ENCODE measurements at regions of chr1 and their contacts with region 1.

Region 1: DNA sequence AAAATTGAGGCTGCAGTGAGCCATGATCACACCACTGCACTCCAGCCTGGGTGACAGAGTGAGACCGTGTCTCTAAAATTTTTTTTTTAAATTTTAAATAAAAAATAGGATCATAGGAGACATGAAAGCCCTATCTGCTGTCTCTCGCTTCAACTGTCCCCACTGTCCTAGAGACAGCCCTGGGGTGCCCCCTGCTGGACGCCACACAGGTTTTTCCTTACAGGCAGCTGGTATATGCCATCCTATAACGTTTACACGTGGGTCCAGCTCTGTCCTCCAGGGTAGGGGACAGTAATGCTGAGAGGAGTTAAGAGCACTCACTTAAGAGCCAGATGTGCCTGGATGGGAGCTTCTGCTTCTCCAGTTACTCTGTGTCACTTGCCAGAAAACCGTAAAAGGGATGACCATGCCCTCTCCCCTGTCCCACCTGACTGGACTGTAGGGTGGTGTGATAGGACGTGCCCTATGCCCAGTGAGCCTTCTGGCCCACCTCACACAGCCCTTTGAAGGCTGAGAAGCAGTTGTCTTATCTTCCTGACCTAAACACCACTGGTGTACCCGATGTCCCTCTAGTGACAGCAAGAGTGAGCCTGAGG is 8.5 kb downstream of the FBXO2 start:
- DNase-seq: no peak
- H3K4me3 ChIP-seq: no peak overlapping the region
- H3K27ac ChIP-seq: no peak overlapping the region
- H3K4me1 ChIP-seq: peaks cover 27 to 36% (median 32%) of the 10 kb centered on the region in 4 donors
- H3K27me3 ChIP-seq: peaks cover 0 to 75% (median 9%) of the 10 kb centered on the region in 4 donors
- CTCF ChIP-seq: peak; percentile 53 to 81 (median 60)
- EP300 ChIP-seq: no peak
- POLR2A ChIP-seq: no peak

Region 2: GRCh38 chr1:11037740-11038182 is 608.0 kb before region 1 on chr1:
- intact Hi-C with region 1: loop called (anchors 2 kb)
- DNase-seq: peak; percentile 95
- H3K4me3 ChIP-seq: no peak overlapping the region
- H3K27ac ChIP-seq: no peak overlapping the region
- H3K4me1 ChIP-seq: peaks cover 6 to 12% (median 8%) of the 10 kb centered on the region in 4 donors
- H3K27me3 ChIP-seq: no peaks in the 10 kb centered on the region
- CTCF ChIP-seq: peak; percentile 93 to 98 (median 96)
- EP300 ChIP-seq: no peak
- POLR2A ChIP-seq: no peak

Region 3: DNA sequence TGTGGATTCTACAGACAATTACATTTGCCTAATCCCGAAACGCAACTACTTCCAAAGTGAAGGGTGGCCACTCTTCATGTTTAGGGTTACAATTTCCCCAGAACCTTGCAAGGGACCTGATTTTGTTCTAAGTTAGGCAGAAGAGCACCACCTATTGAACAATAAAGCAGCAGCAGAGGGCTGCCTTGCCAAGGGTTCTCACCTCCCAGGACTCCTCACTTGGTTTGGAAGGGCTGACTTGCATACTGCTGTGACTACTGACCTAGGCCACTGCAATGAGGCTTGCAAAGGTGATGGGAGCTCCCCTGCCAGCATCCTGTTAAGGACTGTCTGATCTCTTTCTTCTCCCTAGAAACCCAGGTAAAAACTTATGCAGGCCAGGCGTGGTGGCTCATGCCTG is 397.6 kb before region 1 on chr1:
- intact Hi-C with region 1: loop called (anchors 5 kb)
- DNase-seq: no peak
- H3K4me3 ChIP-seq: no peak overlapping the region
- H3K27ac ChIP-seq: no peak overlapping the region
- H3K4me1 ChIP-seq: no peaks in the 10 kb centered on the region
- H3K27me3 ChIP-seq: no peaks in the 10 kb centered on the region
- CTCF ChIP-seq: no peak
- EP300 ChIP-seq: no peak
- POLR2A ChIP-seq: no peak

Region 4: DNA sequence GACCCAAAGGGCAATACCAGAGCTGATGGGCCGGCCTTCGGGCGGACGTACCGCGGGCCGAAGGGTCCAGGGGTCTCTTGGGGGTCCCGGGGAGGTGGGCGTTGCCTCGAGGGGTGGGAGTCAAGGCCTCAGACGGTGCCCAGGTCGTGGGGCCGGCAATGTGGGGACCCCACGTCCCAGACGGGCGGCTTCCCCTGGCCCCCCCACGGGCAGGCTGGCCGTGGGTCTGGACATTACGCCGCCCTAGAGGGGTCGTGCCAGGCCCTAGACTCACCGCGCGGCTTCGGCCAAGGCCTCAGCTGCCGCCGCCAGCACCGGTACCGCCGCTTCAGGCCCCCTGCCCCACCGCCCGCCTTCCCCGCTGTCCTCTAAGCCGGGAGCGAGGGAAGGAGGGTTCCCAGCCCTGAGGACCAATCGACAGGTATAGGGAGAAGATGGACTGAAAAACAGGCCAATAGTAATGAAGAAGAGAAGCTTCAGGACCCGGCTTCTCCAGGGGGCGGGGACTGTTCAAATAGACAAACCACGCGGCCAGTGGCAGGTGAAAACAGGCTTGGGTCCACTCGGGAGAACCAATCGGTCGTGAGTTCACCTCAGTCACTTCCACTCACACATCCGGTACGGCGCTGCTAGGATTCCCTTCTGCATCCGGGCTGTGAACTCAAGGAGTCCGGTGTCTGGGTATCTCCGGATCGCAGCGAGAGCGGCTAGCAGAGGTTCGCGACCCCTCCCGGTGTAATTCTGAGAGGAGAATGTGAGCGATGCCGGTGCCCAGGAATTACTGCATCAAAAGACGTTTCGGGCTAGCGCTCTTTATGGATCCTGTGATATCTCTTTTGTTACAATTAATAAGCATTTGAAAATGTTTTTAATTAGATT is 383.4 kb before region 1 on chr1 and contains the start of gene MTOR:
- intact Hi-C with region 1: loop called (anchors 5 kb)
- DNase-seq: peak; percentile 99
- H3K4me3 ChIP-seq: peak within 1 kb of the TSS; percentile 95 to 100 (median 98)
- H3K27ac ChIP-seq: peak within 1 kb of the TSS; percentile 85 to 89 (median 88)
- H3K4me1 ChIP-seq: peaks cover 13 to 25% (median 23%) of the 10 kb centered on the region in 4 donors
- H3K27me3 ChIP-seq: no peaks in the 10 kb centered on the region
- CTCF ChIP-seq: peak in 2 of 3 experiments; percentile 7 to 36
- EP300 ChIP-seq: no peak
- POLR2A ChIP-seq: peak; percentile 16
- total RNA-seq, gene MTOR: 33.6 to 51.1 (median 41.0) TPM

Region 5: GRCh38 chr1:11337580-11338073 is 308.1 kb before region 1 on chr1:
- intact Hi-C with region 1: loop called (anchors 5 kb)
- DNase-seq: no peak
- H3K4me3 ChIP-seq: no peak overlapping the region
- H3K27ac ChIP-seq: no peak overlapping the region
- H3K4me1 ChIP-seq: peaks cover 0 to 17% (median 8%) of the 10 kb centered on the region in 4 donors
- H3K27me3 ChIP-seq: peaks cover 0 to 93% (median 16%) of the 10 kb centered on the region in 4 donors
- CTCF ChIP-seq: peak; percentile 31 to 50 (median 49)
- EP300 ChIP-seq: no peak
- POLR2A ChIP-seq: no peak

Region 6: GRCh38 chr1:11522400-11523235 is 123.2 kb before region 1 on chr1:
- intact Hi-C with region 1: no loop called
- DNase-seq: no peak
- H3K4me3 ChIP-seq: no peak overlapping the region
- H3K27ac ChIP-seq: no peak overlapping the region
- H3K4me1 ChIP-seq: no peaks in the 10 kb centered on the region
- H3K27me3 ChIP-seq: peaks cover 0 to 30% (median 0%) of the 10 kb centered on the region in 4 donors
- CTCF ChIP-seq: no peak
- EP300 ChIP-seq: no peak
- POLR2A ChIP-seq: no peak

Region 7: GRCh38 chr1:11719313-11720032 is 73.7 kb after region 1 on chr1:
- intact Hi-C with region 1: loop called (anchors 2 kb)
- DNase-seq: peak; percentile 95
- H3K4me3 ChIP-seq: peak overlapping the region; percentile 42 to 58 (median 50)
- H3K27ac ChIP-seq: peak overlapping the region; percentile 20 to 45 (median 40)
- H3K4me1 ChIP-seq: peaks cover 8 to 28% (median 21%) of the 10 kb centered on the region in 4 donors
- H3K27me3 ChIP-seq: peaks cover 0 to 18% (median 0%) of the 10 kb centered on the region in 4 donors
- CTCF ChIP-seq: peak in 2 of 3 experiments; percentile 92 to 94
- EP300 ChIP-seq: no peak
- POLR2A ChIP-seq: no peak

Region 8: DNA sequence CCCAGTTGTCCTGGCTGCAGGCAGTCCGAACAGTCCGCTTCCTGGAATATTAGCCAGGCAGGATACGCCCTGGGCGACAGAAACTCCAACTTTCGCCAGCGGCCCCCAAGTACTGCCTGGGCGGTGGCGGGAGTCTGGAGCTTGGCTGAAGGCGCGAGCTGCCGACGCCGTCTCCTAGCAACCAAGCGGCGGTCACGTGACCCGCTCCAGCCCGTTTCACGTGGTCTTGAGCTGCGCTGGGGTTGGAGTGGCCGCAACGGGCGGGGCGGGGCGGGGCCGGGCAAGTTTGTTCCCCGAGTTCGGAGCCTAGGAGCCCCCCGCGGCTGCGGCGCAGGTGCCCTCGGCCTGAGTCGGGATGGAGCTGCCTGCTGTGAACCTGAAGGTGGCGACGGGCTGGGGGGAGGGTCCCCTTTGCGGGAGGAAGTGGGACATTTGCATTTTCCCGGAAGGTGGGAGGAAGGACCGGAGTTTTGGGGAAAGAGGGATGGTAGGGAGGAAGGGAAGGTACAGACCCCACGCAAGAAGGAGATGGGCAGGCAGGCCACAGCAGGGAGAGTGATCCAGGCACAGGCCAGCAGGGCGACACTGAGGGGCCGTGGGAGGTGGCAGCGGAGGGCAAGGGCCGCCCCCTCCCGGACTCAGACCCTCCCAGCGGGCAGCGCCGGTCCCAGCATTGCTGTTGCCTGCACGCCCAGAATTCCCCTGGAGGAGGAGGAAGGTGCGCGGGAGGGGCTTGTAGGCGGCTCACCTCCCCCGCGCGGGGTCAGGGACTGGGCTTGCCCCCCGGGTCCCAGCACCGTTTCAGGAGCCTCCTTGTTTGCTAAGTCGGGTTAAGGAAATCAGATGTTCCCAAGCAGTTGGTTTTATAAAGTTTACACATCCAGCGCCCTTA is 90.3 kb after region 1 on chr1 and contains the start of gene AGTRAP:
- intact Hi-C with region 1: no loop called
- DNase-seq: peak; percentile 100
- H3K4me3 ChIP-seq: peak within 1 kb of the TSS; percentile 76 to 95 (median 80)
- H3K27ac ChIP-seq: peak within 1 kb of the TSS; percentile 86 to 92 (median 86)
- H3K4me1 ChIP-seq: peaks cover 31 to 65% (median 62%) of the 10 kb centered on the region in 4 donors
- H3K27me3 ChIP-seq: no peaks in the 10 kb centered on the region
- CTCF ChIP-seq: peak in 1 of 3 experiments; percentile 6
- EP300 ChIP-seq: no peak
- POLR2A ChIP-seq: peak; percentile 72
- total RNA-seq, gene AGTRAP: 31.6 to 73.4 (median 45.6) TPM